Activated CD4-positive, alpha-beta memory T cell treated with anti-CD3 and anti-CD28 coated beads for 36 hours (primary cell): ENCODE measurements at regions of chr16 and their contacts with region 1.

Region 1: DNA sequence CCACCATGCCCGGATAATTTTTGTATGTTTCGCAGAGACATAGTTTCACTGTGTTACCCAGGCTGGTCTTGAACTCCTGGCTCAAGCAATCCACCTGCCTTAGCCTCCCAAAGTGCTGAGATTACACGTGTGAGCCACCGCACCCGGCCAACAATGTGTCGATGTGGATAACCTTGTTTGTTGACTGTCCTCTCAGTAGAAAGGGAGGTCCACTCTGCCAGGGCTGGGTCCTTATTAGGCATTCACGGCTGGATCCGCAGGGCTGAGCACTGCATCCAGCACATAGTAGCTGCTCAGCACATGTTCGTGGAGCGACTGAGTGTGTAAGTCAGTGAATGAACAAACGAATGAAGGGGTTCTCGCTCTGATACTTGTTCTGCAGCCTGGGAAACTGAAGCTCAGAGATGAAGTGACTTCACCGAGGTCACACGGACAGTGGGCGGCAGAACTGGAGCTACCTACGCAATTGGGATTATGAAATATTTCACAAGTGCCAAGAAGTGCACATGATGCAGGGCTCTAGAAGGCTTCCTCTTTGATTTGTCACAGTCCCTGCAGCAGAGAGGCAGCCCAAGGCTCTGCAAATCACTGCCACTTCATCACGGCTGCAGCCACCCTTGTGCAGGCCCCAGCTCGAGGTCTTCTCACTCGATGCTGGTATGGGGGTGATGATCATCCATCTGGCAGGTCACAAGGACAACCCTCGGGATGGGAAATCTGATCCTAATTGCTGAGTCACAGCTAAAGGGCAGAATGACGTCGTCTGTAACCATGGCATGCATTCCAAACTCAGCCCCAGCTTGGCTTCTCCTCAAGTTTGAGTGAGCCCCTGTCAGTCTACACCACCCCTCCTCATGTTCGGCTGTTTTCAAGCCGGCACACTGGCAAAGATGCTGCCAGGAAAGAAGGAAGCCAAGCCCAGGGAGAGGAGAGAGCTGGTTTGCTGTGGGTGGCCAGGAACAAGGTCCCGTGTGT is 28.0 kb upstream of the SNN start:
- DNase-seq: no peak
- H3K4me3 Mint-ChIP-seq: no peak overlapping the region
- H3K27ac Mint-ChIP-seq: no peak overlapping the region
- H3K4me1 Mint-ChIP-seq: peaks cover 5% of the 10 kb centered on the region
- H3K27me3 Mint-ChIP-seq: no peaks in the 10 kb centered on the region

Region 2: GRCh38 chr16:11526655-11527350 is 113.4 kb before region 1 on chr16:
- CTCF ChIA-PET with region 1: interaction called, 65 read pairs
- POLR2A ChIA-PET with region 1: no interaction called
- intact Hi-C with region 1: loop called (anchors 1 kb)
- DNase-seq: no peak
- H3K4me3 Mint-ChIP-seq: no peak overlapping the region
- H3K27ac Mint-ChIP-seq: no peak overlapping the region
- H3K4me1 Mint-ChIP-seq: no peaks in the 10 kb centered on the region
- H3K27me3 Mint-ChIP-seq: no peaks in the 10 kb centered on the region

Region 3: DNA sequence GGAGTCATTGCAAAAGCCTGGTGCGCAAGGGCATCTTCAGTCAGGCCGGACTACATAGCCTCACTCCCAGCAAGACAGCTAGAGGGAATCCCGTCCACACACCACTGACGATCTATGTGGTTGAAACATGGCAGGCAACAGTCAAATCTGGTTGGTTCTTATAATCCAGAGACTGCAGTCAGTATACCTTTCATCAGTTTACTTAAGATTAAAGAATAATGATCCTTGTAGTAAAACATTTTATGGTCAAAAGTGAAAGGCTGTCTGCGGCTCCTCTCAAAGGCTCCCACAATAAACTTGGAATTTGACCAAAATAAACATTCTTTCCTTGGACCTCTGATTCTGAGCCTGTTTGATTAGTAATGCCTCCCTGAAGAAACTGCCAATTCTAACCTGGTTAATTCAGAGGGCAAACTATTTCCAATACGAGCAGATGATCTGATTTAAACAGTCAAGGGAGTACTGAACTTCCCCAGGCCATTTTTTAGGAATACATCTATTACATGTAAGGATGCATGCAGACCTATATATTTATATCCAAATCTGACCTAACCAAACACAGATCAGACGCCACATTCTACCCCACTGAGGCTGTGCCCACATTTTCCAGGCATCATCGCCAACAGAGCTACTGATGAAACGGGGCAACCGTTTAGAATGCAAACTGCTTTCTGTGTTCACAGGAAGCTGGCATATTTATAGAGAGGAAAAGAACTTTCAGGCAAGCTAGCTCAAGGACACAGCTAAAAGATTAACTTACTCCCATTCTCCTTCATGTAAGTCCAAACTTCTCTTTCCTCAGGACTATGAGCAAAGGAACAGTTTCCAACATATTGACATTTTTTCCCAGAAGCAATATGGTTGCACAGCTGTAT is 117.7 kb after region 1 on chr16:
- CTCF ChIA-PET with region 1: no interaction called
- POLR2A ChIA-PET with region 1: no interaction called
- intact Hi-C with region 1: no loop called
- DNase-seq: no peak
- H3K4me3 Mint-ChIP-seq: no peak overlapping the region
- H3K27ac Mint-ChIP-seq: no peak overlapping the region
- H3K4me1 Mint-ChIP-seq: no peaks in the 10 kb centered on the region
- H3K27me3 Mint-ChIP-seq: no peaks in the 10 kb centered on the region

Region 4: DNA sequence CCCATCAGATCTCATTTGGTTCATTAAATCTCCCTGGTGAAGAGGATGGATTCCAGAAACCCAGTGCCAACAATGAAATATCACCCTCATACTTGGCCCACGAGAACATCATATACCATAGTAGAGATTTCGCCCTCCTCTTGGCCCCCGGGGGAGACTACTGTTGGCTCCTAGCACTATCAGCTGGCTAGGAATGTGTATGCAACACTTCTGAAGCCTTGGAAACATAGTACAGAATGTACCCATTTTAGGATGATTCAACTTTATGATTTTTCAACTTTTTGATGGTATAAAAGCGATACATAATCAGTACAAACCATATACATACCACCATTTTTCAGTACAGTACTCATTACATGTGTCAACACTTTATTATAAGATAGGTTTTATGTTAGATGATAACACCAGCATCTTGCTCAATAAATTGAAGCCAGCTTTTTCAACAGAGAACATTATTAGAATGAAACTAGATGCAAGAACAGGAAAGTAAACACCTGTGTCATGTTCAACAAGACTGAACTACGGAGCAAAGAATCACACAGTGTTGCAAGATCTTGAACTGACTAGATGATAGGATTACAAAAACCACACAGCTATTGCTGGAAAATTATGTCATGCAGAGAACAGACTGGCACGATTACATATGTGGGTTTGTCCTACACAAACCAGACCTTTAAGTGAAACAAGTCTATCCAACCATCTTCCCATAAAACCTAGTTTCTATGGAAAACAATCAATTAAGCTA is 193.9 kb after region 1 on chr16:
- CTCF ChIA-PET with region 1: no interaction called
- POLR2A ChIA-PET with region 1: no interaction called
- intact Hi-C with region 1: no loop called
- DNase-seq: no peak
- H3K4me3 Mint-ChIP-seq: no peak overlapping the region
- H3K27ac Mint-ChIP-seq: no peak overlapping the region
- H3K4me1 Mint-ChIP-seq: no peaks in the 10 kb centered on the region
- H3K27me3 Mint-ChIP-seq: no peaks in the 10 kb centered on the region